ENCODE measurements at regions of chr15 and their contacts with region 1.

Region 1: DNA sequence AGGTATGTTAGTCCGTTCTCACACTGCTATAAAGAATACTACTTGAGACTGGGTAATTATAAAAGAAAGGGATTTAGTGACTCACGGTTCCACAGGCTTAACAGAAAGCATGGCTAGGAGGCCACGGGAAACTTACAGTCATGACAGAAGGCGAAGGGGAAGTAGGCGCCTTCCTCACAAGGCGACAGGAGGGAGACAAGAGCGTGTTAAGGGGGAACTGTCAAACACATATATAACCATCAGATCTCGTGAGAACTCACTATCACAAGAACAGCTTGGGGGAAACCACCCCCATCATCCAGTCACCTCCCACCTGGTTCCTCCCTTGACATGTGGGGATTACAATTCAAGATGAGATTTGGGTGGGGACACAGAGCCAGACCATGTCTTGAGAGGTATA is 30.4 kb downstream of the SPRED1 start:
- DNase-seq: no peak
- H3K4me3 ChIP-seq: no peak overlapping the region
- H3K27ac ChIP-seq: no peak overlapping the region
- H3K4me1 ChIP-seq: peaks cover 0 to 13% (median 8%) of the 10 kb centered on the region in 4 donors
- H3K27me3 ChIP-seq: no peaks in the 10 kb centered on the region
- CTCF ChIP-seq: no peak
- EP300 ChIP-seq: no peak
- POLR2A ChIP-seq: no peak

Region 2: DNA sequence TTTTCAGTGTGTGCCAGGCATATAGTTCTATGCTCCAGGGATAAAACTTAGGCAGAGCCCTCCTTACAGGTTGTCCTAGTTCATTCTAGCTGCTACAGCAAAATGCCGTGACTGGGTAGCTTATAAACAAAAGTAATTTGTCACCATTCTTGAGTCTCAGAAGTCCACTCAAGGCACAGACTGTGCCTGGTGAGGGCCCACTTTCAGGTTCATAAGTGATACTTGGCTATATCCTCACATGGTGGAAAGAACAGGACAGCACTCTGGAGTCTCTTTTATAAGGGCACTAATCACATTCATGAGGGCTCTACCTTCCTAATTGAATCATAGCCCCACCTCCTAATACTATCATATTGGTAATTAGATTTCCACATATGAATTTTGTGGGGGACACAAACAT is 49.7 kb after region 1 on chr15:
- in situ Hi-C with region 1: no loop called
- intact Hi-C with region 1: loop called (anchors 2 kb)
- DNase-seq: no peak
- H3K4me3 ChIP-seq: no peak overlapping the region
- H3K27ac ChIP-seq: no peak overlapping the region
- H3K4me1 ChIP-seq: no peaks in the 10 kb centered on the region
- H3K27me3 ChIP-seq: no peaks in the 10 kb centered on the region
- CTCF ChIP-seq: no peak
- EP300 ChIP-seq: no peak
- POLR2A ChIP-seq: no peak

Region 3: DNA sequence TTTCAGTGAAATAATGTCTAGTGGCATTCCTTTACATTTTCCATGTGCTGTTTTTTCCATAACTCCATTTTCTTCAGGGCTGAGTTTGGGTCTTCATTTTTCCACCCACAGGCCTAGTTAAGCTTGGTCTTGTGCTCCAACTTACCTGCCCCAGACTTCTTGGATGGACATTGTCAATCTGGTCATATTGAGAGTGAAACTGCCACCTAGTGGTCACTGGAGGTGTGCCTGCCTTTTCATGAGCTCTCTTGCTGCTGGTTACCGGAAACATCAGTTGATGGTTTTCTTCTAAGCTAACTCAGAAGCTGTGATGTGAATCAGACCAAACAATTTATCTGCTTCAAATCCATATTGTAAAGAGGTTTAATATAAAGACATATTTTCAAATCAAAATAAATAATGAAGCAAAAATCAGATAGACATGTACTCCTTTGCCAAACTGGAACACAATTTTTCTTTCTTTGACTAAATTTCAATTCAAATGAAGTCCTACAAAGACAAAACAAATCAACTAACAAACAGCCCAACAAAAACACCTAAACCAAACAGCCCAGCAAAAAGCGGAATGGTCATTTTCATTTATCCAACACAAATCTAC is 416.7 kb after region 1 on chr15:
- in situ Hi-C with region 1: no loop called
- intact Hi-C with region 1: no loop called
- DNase-seq: peak; percentile 76
- H3K4me3 ChIP-seq: no peak overlapping the region
- H3K27ac ChIP-seq: no peak overlapping the region
- H3K4me1 ChIP-seq: peaks cover 6 to 23% (median 15%) of the 10 kb centered on the region in 4 donors
- H3K27me3 ChIP-seq: no peaks in the 10 kb centered on the region
- CTCF ChIP-seq: peak; percentile 76 to 86 (median 81)
- EP300 ChIP-seq: no peak
- POLR2A ChIP-seq: no peak